Posterior cingulate gyrus (tissue), 11 donors: ENCODE measurements at regions of chr19 and their contacts with region 1.

Region 1: GRCh38 chr19:37217855-37218591 is at the start of gene ZNF383:
- DNase-seq: peak; percentile 83 to 98 (median 90)

Region 2: GRCh38 chr19:37172368-37173366 is 45.4 kb before region 1 on chr19 and contains the start of gene ZNF585A:
- intact Hi-C with region 1: loop called (anchors 5 kb)
- DNase-seq: peak; percentile 84 to 99 (median 92)